Gastrocnemius medialis (tissue), 4 donors: ENCODE measurements at regions of chr18 and their contacts with region 1.

Region 1: GRCh38 chr18:21179590-21180220 is 62.3 kb upstream of the GREB1L start:
- DNase-seq: peak in 1 of 2 donors; percentile 21
- ATAC-seq: peak; percentile 42 to 70
- H3K4me3 ChIP-seq: no peak overlapping the region
- H3K27ac ChIP-seq: no peak overlapping the region
- H3K4me1 ChIP-seq: no peaks in the 10 kb centered on the region
- H3K27me3 ChIP-seq: no peaks in the 10 kb centered on the region
- CTCF ChIP-seq: peak; percentile 31 to 68 (median 58)
- POLR2A ChIP-seq: no peak

Region 2: DNA sequence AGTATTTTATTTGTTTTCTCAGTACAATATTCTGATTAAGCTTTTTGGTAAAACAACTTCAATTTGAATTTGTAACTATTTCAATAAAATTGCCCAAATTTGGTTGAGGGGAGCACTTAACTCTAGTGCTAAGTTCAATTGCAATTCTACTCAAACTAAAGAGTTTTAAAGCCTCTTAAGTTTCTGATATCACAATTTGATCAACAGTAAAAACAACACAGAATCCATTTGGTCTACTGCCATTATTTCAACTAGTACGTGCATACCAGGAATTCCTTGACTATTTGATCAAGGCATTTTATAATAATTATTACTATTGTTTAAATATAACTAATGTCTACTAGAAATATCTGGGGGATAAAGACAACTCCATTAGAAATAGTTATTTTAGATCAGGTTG is 219.0 kb before region 1 on chr18:
- in situ Hi-C with region 1: no loop called
- intact Hi-C with region 1: loop called (anchors 5 kb)
- DNase-seq: no peak
- ATAC-seq: no peak
- H3K4me3 ChIP-seq: no peak overlapping the region
- H3K27ac ChIP-seq: no peak overlapping the region
- H3K4me1 ChIP-seq: no peaks in the 10 kb centered on the region
- H3K27me3 ChIP-seq: no peaks in the 10 kb centered on the region
- CTCF ChIP-seq: no peak
- POLR2A ChIP-seq: no peak

Region 3: GRCh38 chr18:20996418-20996817 is 183.3 kb before region 1 on chr18:
- in situ Hi-C with region 1: no loop called
- intact Hi-C with region 1: loop called (anchors 10 kb)
- DNase-seq: no peak
- ATAC-seq: no peak
- H3K4me3 ChIP-seq: no peak overlapping the region
- H3K27ac ChIP-seq: no peak overlapping the region
- H3K4me1 ChIP-seq: peaks cover 8 to 12% of the 10 kb centered on the region in 2 donors
- H3K27me3 ChIP-seq: no peaks in the 10 kb centered on the region
- CTCF ChIP-seq: no peak
- POLR2A ChIP-seq: no peak

Region 4: DNA sequence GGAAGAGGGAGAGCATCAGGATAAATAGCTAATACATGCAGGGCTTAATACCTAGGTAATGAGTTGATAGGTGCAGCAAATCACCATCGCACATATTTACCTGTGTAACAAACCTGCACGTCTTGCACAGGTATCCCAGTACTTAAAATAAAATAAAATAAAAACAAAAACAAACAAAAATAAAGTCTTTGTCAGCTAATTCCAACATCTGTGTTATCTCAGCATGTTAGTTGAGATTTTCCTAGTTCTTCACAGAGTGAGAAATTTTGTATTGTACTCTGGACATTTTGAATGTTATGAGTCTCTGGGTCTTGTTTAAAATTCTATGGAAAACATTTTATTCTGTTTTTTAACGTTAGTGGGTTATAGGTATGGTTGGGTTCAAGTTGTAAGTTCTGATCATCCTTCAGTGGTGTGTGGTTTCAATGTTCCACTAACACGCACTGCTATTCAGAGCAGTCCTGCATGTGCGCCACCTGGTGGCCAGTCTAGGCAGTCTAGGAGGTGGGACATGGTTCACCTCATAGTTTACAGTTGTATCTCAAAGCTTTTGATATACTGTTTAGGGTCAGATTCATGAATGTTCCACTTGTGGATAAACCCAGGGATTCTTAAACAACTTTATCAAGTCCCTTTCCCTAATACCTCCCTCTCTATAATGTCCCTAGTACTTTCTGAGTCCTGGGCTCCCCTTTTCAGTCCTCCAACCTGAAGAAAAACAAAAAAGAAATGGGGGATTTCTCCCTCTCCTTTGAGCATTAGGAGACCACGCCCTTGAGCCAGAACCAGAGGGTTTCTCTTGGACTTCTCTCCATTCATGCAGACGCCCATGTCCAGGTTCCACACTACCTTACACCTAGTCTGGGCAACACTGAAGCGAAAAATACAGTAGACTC is 776.3 kb after region 1 on chr18:
- in situ Hi-C with region 1: loop called in 1 of 4 experiments (anchors 25 kb)
- intact Hi-C with region 1: no loop called
- DNase-seq: peak; percentile 25 to 36
- ATAC-seq: peak; percentile 66 to 75
- H3K4me3 ChIP-seq: no peak overlapping the region
- H3K27ac ChIP-seq: no peak overlapping the region
- H3K4me1 ChIP-seq: no peaks in the 10 kb centered on the region
- H3K27me3 ChIP-seq: no peaks in the 10 kb centered on the region
- CTCF ChIP-seq: peak; percentile 53 to 88 (median 60)
- POLR2A ChIP-seq: no peak